ENCODE measurements at regions of chr15 and their contacts with region 1.

Region 1: DNA sequence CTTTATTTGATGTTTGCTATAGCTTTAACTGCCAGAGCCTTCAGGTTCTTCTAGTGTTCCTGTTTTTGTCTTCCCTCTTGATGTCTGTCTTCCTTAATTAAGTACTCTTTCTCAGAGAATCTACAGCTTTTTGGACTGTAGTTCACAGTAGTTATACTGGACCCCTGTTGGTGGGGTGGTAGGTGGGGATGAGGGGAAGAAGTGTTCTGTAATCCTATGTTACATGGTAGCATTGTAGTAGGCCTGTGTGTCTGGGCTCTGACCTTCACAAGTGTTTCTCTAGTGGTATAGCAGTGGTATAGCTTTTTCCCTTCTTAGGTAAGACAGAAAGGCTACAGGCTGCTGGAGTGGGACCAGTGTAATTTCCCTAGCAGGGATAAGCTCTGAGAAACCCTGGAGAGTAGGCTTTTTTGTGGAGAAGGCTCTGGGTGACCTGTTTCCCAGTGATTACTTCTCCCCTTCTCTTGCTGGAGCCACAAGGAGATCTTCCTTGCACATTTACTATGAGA is 59.6 kb downstream of the CHRNA7 start:
- DNase-seq: no peak
- H3K4me3 ChIP-seq: no peak overlapping the region
- H3K27ac ChIP-seq: no peak overlapping the region
- H3K4me1 ChIP-seq: no peaks in the 10 kb centered on the region
- H3K27me3 ChIP-seq: no peaks in the 10 kb centered on the region
- CTCF ChIP-seq: no peak
- POLR2A ChIP-seq: no peak

Region 2: DNA sequence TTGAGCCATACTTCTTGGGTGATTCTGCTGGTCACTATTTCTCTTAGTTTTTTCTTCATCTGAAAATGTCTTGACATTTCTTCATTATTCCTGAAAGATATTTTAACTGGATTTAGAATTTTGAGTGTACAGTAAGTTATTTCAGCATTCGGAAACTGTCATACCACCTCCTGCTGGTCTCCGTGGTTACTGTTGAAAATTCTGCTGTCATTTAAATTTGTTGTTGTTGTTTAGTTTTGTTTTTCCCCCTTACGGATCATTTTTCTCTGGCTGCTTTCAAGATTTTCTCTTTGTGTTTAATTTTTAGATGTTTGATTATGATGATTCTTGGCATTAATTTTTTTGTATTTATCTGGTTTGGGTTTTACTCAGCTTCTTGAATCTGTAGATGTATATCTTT is 40.9 kb after region 1 on chr15:
- CTCF ChIA-PET with region 1: no interaction called
- POLR2A ChIA-PET with region 1: no interaction called
- dilution Hi-C with region 1: no loop called
- intact Hi-C with region 1: loop called (anchors 10 kb)
- DNase-seq: no peak
- H3K4me3 ChIP-seq: no peak overlapping the region
- H3K27ac ChIP-seq: no peak overlapping the region
- H3K4me1 ChIP-seq: no peaks in the 10 kb centered on the region
- H3K27me3 ChIP-seq: no peaks in the 10 kb centered on the region
- CTCF ChIP-seq: no peak
- POLR2A ChIP-seq: no peak